ENCODE measurements at regions of chr7 and their contacts with region 1.

Region 1: GRCh38 chr7:150876817-150877526 is 24.7 kb downstream of the AOC1 start:
- DNase-seq: peak; percentile 42 to 70 (median 54)
- H3K4me3 ChIP-seq: no peak overlapping the region
- H3K4me3 Mint-ChIP-seq: peak overlapping the region; percentile 29 to 86 (median 48)
- H3K27ac ChIP-seq: no peak overlapping the region
- H3K27ac Mint-ChIP-seq: peak overlapping the region in 6 of 7 donors; percentile 44 to 93 (median 64)
- H3K4me1 ChIP-seq: peaks cover 12% of the 10 kb centered on the region
- H3K4me1 Mint-ChIP-seq: peaks cover 14 to 34% (median 20%) of the 10 kb centered on the region in 4 donors
- H3K27me3 ChIP-seq: no peaks in the 10 kb centered on the region
- H3K27me3 Mint-ChIP-seq: no peaks in the 10 kb centered on the region

Region 2: GRCh38 chr7:150778738-150779301 is 98.2 kb before region 1 on chr7:
- CTCF ChIA-PET with region 1: no interaction called
- POLR2A ChIA-PET with region 1: no interaction called
- intact Hi-C with region 1: loop called (anchors 1 kb)
- DNase-seq: peak; percentile 53 to 61 (median 57)
- H3K4me3 ChIP-seq: no peak overlapping the region
- H3K4me3 Mint-ChIP-seq: no peak overlapping the region
- H3K27ac ChIP-seq: no peak overlapping the region
- H3K27ac Mint-ChIP-seq: no peak overlapping the region
- H3K4me1 ChIP-seq: no peaks in the 10 kb centered on the region
- H3K4me1 Mint-ChIP-seq: peaks cover 0 to 5% (median 5%) of the 10 kb centered on the region in 4 donors
- H3K27me3 ChIP-seq: no peaks in the 10 kb centered on the region
- H3K27me3 Mint-ChIP-seq: peaks cover 0 to 6% of the 10 kb centered on the region in 2 donors